Aorta (tissue), 5 donors: ENCODE measurements at regions of chr17 and their contacts with region 1.

Region 1: DNA sequence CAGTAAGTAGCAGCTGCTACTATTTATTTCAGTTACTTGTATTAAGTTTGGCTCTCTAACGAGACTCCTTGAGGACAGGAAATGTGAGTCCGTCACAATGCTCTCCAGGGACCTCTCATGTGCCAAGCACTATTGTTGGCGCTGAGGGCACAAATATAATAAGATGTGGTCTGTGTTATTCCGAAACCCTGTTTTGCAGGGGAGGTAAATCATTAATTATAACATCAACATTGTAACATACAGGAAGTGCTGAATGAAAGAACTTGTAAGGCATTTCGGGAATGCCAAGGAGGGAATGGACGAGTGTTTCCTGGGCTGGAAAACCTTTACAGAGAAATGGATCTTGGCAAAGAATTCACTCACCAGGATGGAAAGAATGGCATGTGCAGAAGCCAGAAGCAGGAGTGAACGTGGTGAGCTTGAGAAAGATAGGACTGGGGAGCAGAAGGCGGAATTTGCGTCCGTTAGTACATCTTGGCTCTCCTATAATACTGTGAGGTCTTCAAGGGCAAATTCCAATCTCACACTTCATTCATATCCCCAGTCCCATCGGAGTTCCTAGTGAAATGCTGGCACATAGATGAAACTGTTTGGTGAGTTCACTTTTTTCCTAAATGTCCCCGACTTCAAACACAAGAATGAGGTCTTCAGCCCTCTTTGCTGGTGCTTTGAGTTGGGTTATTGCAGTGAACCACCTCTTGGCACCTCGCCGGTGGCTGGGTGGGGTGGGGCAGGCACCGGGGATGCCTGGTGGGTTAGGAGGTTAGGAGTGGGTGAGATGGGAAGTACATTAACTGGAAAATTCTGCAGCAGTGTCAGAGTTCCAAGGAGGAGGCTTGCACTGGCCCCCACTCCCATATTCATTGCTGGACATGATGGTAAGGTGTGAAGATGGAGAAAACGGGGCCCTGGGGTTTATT is 11.5 kb downstream of the TAC4 start:
- DNase-seq: peak in 1 of 2 donors; percentile 73
- ATAC-seq: peak; percentile 69
- H3K4me3 ChIP-seq: no peak overlapping the region
- H3K27ac ChIP-seq: peak overlapping the region; percentile 61 to 98
- H3K4me1 ChIP-seq: peaks cover 2 to 4% of the 10 kb centered on the region in 2 donors
- H3K27me3 ChIP-seq: no peaks in the 10 kb centered on the region

Region 2: GRCh38 chr17:49763735-49764558 is 72.4 kb before region 1 on chr17 and contains the start of gene FAM117A:
- intact Hi-C with region 1: loop called in 1 of 2 experiments (anchors 2 kb)
- DNase-seq: peak; percentile 95 to 97
- ATAC-seq: peak; percentile 98
- H3K4me3 ChIP-seq: peak within 1 kb of the TSS; percentile 92 to 94
- H3K27ac ChIP-seq: no peak within 1 kb of the TSS
- H3K4me1 ChIP-seq: no peaks in the 10 kb centered on the region
- H3K27me3 ChIP-seq: no peaks in the 10 kb centered on the region
- total RNA-seq, gene FAM117A: 16.9 to 17.2 TPM

Region 3: GRCh38 chr17:49775543-49776260 is 60.7 kb before region 1 on chr17:
- intact Hi-C with region 1: no loop called
- DNase-seq: no peak
- ATAC-seq: peak; percentile 61
- H3K4me3 ChIP-seq: no peak overlapping the region
- H3K27ac ChIP-seq: peak overlapping the region; percentile 50 to 71
- H3K4me1 ChIP-seq: peaks cover 2 to 5% of the 10 kb centered on the region in 2 donors
- H3K27me3 ChIP-seq: no peaks in the 10 kb centered on the region

Region 4: GRCh38 chr17:49822829-49823228 is 13.5 kb before region 1 on chr17:
- intact Hi-C with region 1: no loop called
- DNase-seq: no peak
- ATAC-seq: peak; percentile 46
- H3K4me3 ChIP-seq: no peak overlapping the region
- H3K27ac ChIP-seq: no peak overlapping the region
- H3K4me1 ChIP-seq: no peaks in the 10 kb centered on the region
- H3K27me3 ChIP-seq: no peaks in the 10 kb centered on the region

Region 5: DNA sequence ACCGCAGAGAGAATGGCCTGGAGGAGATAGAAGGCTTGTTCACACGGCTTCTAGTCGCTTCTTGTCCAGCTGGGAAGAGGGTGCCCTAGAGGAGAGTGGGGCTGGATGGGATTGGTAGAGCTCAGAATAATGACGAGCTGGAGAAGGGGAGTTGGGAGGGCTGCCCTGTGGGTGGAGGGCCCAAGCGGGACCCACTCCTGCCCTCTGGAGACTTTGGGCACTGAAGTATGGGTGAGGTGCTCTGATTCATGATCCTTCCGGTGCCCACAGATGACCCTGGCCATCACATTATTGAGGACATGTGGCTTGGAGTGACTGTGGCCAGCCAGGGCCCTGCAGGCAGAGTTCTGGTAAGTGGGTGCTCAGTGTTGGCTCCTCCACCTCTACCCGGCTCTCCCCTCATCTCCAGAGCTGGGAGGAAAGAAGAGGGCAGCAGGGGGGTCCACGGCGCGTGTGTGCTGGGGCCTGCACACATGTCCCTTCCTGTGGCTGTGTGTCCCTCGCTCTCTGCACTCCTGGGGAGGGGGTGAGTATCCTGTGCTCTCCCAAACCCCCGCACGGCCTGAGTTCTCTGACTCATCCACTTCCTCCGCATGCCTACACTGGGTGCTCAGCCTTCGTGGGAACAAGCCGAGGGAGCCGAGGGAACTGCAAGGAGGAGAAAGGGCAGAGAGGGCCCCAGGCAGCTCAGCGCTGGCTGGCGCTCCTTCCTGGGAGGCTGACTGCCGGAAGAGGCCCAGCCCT is 228.1 kb after region 1 on chr17:
- intact Hi-C with region 1: no loop called
- DNase-seq: peak; percentile 90 to 93
- ATAC-seq: peak; percentile 51
- H3K4me3 ChIP-seq: no peak overlapping the region
- H3K27ac ChIP-seq: peak overlapping the region; percentile 52 to 91
- H3K4me1 ChIP-seq: peaks cover 3 to 8% of the 10 kb centered on the region in 2 donors
- H3K27me3 ChIP-seq: no peaks in the 10 kb centered on the region